Activated CD4-positive, alpha-beta memory T cell treated with anti-CD3 and anti-CD28 coated beads for 36 hours (primary cell): ENCODE measurements at regions of chr3 and their contacts with region 1.

Region 1: GRCh38 chr3:32143849-32144757 is 37.7 kb downstream of the GPD1L start:
- DNase-seq: peak; percentile 51
- H3K4me3 Mint-ChIP-seq: no peak overlapping the region
- H3K27ac Mint-ChIP-seq: no peak overlapping the region
- H3K4me1 Mint-ChIP-seq: no peaks in the 10 kb centered on the region
- H3K27me3 Mint-ChIP-seq: no peaks in the 10 kb centered on the region

Region 2: GRCh38 chr3:32018757-32019564 is 125.1 kb before region 1 on chr3:
- CTCF ChIA-PET with region 1: interaction called, 77 read pairs
- POLR2A ChIA-PET with region 1: no interaction called
- intact Hi-C with region 1: loop called (anchors 1 kb)
- DNase-seq: no peak
- H3K4me3 Mint-ChIP-seq: no peak overlapping the region
- H3K27ac Mint-ChIP-seq: no peak overlapping the region
- H3K4me1 Mint-ChIP-seq: no peaks in the 10 kb centered on the region
- H3K27me3 Mint-ChIP-seq: no peaks in the 10 kb centered on the region

Region 3: DNA sequence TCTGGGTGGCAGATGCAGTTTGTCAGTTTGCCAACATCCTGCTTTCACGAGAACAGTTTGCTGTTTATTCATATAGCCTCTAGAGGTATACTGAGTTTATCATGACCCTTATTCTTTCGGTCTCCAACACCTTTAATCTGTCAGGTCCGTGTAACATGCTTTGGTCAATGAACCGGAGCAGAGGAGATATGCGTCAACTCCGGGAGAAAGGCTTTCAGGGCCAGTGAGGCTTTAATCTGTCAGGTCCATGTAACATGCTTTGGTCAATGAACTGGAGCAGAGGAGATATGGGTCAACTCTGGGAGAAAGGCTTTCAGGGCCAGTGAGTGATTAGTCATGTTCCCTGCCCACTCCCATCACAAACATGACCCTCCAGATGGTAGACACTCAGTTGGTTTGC is 54.6 kb before region 1 on chr3:
- CTCF ChIA-PET with region 1: no interaction called
- POLR2A ChIA-PET with region 1: no interaction called
- intact Hi-C with region 1: no loop called
- DNase-seq: no peak
- H3K4me3 Mint-ChIP-seq: no peak overlapping the region
- H3K27ac Mint-ChIP-seq: no peak overlapping the region
- H3K4me1 Mint-ChIP-seq: peaks cover 9% of the 10 kb centered on the region
- H3K27me3 Mint-ChIP-seq: peaks cover 7% of the 10 kb centered on the region

Region 4: GRCh38 chr3:32177702-32178198 is 33.6 kb after region 1 on chr3:
- CTCF ChIA-PET with region 1: no interaction called
- POLR2A ChIA-PET with region 1: no interaction called
- intact Hi-C with region 1: no loop called
- DNase-seq: peak; percentile 73
- H3K4me3 Mint-ChIP-seq: peak overlapping the region; percentile 25
- H3K27ac Mint-ChIP-seq: no peak overlapping the region
- H3K4me1 Mint-ChIP-seq: peaks cover 12% of the 10 kb centered on the region
- H3K27me3 Mint-ChIP-seq: no peaks in the 10 kb centered on the region